Colonic mucosa (tissue), 4 donors: ENCODE measurements at regions of chr18 and their contacts with region 1.

Region 1: DNA sequence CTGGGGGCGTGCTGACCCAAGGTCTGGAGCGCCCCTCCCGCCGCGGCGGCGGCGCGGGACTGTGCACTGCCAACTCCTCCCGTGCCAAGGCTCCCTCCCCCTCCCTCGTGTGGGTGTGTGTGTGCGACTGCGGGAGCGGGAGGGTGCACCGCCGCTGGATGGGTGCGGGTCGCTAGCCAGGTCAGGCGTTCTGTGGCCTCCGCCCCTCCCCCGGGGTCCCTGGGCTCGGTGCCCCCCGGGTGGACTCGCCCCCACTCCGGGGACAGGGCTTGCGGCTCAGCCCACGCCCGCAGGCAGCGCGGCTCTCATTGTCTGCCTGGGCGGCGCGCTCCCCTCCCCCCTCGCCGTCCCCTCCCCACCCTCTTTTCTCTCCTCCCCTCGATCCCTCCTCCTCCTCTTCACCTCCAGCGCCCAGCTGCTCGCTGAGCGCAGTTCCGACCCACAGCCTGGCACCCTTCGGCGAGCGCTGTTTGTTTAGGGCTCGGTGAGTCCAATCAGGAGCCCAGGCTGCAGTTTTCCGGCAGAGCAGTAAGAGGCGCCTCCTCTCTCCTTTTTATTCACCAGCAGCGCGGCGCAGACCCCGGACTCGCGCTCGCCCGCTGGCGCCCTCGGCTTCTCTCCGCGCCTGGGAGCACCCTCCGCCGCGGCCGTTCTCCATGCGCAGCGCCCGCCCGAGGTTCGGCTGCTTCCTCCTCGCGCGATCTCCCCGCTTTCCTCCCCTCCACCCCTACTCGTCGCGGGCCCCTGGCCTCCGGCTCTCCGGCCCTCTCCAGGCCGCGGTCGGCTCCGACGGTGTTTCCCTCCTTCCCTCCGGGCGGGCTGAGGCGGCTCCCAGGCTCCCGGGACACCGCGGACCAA is at the start of gene GATA6:
- DNase-seq: peak; percentile 94
- H3K4me3 ChIP-seq: peak within 1 kb of the TSS; percentile 82
- H3K27ac ChIP-seq: peak within 1 kb of the TSS; percentile 92
- H3K4me1 ChIP-seq: no peaks in the 10 kb centered on the region
- H3K27me3 ChIP-seq: peaks cover 28% of the 10 kb centered on the region
- CTCF ChIP-seq: peak; percentile 6
- total RNA-seq, gene GATA6: 52.7 to 61.3 TPM

Region 2: GRCh38 chr18:21393986-21394385 is 775.2 kb before region 1 on chr18:
- intact Hi-C with region 1: no loop called
- DNase-seq: no peak
- H3K4me3 ChIP-seq: no peak overlapping the region
- H3K27ac ChIP-seq: no peak overlapping the region
- H3K4me1 ChIP-seq: no peaks in the 10 kb centered on the region
- H3K27me3 ChIP-seq: no peaks in the 10 kb centered on the region
- CTCF ChIP-seq: no peak

Region 3: DNA sequence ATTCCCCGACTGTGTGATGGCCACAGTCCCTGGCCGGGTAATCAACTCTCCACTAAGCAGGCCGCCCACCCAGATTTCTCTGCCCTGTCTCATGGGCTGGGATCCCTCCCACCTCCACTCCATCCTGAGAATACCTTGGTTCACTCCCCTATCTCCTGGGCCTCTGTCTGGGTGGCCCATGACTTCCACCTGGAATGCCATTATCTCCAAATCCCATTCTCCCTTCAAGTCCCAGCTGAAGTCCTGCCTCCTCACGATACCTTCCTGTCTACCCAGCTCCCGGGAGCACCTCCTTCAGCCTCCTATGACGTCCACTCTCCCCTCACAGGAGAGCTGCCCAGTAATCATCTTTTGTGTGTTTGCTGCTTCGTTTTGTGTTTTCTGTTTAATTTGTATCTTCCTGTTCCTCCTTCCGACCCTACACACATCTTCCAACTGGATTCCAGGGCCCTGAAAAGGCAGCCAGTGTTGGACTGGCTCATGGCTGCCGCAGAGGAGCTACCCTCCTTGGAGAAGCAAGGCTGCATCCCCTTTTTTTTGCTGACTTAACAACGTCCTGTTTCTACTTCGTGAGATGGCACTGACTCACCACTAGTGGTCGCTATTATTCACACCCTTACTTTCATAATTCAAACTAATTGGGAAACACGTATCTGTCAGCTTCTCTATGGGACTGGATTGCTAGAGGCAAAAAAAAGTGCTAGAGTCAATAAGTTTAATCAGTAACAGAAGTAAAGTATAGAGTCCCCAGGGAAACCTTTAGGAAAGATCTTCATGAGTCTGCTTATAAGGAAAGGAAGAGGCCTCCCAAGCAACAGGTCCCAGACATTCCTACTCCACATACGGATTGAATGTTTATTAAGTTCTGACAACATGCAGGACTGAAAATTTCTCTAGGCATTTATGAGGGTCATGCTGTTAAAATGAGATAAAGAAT is 171.8 kb before region 1 on chr18:
- intact Hi-C with region 1: loop called (anchors 5 kb)
- DNase-seq: peak; percentile 33
- H3K4me3 ChIP-seq: no peak overlapping the region
- H3K27ac ChIP-seq: peak overlapping the region; percentile 56
- H3K4me1 ChIP-seq: peaks cover 9% of the 10 kb centered on the region
- H3K27me3 ChIP-seq: no peaks in the 10 kb centered on the region
- CTCF ChIP-seq: peak; percentile 73

Region 4: DNA sequence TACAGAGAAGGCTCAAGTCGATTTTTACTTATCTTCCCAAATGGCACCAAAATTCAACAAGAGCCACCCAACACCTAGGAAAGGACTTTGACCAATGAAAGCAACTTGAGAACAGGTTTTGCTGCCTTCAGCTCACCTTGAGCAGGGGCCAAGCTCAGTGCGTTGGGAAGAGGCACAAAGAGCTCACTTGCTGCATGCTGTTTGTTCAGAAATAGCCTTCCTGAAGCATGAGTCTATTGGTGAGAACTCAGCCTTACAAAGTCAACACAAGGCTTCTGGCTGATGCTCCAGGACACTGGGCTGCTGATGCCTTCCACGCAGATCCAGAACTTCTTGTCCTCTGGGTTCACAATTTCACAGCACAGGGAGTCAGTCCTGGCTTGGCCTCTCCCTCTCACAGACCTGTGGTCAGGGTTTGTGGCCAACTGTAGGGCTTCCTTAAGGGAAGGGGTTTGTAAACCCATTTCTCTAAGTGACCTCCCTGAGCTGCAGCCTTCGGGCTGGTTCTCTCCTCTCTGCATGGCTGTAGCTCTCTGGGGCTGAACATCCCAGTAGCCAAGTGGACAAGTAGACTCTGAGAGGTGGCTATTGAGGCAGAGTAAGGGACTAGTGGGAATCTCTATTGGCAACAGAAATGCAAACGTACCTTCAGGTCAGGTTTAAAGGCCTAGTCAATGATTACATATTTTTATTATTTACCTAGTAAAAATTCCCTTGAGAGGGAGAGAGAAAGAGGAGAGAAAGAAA is 124.6 kb before region 1 on chr18:
- intact Hi-C with region 1: loop called (anchors 5 kb)
- DNase-seq: peak; percentile 84
- H3K4me3 ChIP-seq: no peak overlapping the region
- H3K27ac ChIP-seq: peak overlapping the region; percentile 93
- H3K4me1 ChIP-seq: peaks cover 9% of the 10 kb centered on the region
- H3K27me3 ChIP-seq: no peaks in the 10 kb centered on the region
- CTCF ChIP-seq: no peak

Region 5: GRCh38 chr18:22108674-22109073 is 60.6 kb before region 1 on chr18:
- intact Hi-C with region 1: loop called (anchors 10 kb)
- DNase-seq: no peak
- H3K4me3 ChIP-seq: no peak overlapping the region
- H3K27ac ChIP-seq: no peak overlapping the region
- H3K4me1 ChIP-seq: no peaks in the 10 kb centered on the region
- H3K27me3 ChIP-seq: no peaks in the 10 kb centered on the region
- CTCF ChIP-seq: no peak

Region 6: DNA sequence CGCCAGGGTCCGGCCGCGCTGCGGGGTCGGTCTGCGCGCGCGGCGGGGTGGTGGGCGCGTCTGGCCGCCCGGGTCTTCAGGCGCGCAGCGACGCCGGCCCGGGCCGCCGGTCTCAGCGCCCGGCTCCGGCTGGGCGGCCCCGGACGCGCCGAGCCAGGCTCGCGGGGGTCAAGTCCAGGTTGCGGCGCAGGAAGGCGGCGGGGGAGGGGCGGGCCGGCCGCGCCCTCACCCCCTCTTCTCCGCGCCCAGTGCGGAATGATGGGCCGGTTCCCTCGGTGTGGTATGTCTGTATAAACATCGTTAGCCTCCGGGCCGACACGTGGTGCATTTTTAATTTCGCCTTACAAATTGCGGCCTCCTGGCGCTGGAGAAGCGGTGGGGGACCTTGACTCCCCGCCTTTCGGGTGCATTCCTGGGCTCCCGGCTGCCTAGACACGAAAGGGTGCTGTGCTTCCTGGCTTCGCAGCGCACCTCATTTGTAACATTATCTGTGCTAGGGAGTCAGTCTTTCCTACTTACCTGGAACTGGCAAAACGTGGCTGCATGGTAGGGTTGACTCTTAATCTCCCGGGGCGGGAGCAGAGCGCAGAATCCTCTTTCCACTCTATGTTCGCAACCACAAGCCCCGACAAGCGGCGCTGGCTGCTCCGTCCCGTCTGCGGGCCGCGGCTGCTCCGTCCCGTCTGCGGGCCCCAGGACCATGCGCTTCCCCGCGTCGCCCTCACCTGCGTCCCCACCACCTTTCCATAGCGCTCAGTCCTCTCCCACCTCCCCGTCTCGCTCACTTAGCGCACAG is 179.5 kb after region 1 on chr18:
- intact Hi-C with region 1: loop called (anchors 5 kb)
- DNase-seq: peak; percentile 74
- H3K4me3 ChIP-seq: peak overlapping the region; percentile 45
- H3K27ac ChIP-seq: peak overlapping the region; percentile 78
- H3K4me1 ChIP-seq: no peaks in the 10 kb centered on the region
- H3K27me3 ChIP-seq: no peaks in the 10 kb centered on the region
- CTCF ChIP-seq: no peak

Region 7: DNA sequence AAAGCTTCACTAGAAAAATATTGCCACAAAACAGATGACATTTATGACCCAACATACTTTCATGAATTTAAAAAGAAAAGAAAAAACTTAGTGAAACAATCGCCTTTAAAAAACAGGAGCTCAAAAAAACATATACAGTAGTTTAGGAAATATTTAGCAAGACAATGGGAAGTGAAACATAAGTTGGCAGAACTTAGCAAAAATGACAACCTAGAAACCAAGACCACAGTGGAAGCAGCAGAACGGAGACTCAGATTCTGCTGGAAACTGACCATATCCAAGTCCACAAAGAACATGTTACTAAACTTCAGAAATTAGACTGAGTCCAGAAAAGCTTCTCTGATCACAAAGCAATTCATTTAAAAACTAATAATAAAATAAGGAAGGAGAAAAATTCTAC is 290.3 kb after region 1 on chr18:
- intact Hi-C with region 1: no loop called
- DNase-seq: no peak
- H3K4me3 ChIP-seq: no peak overlapping the region
- H3K27ac ChIP-seq: no peak overlapping the region
- H3K4me1 ChIP-seq: no peaks in the 10 kb centered on the region
- H3K27me3 ChIP-seq: no peaks in the 10 kb centered on the region
- CTCF ChIP-seq: no peak

Region 8: DNA sequence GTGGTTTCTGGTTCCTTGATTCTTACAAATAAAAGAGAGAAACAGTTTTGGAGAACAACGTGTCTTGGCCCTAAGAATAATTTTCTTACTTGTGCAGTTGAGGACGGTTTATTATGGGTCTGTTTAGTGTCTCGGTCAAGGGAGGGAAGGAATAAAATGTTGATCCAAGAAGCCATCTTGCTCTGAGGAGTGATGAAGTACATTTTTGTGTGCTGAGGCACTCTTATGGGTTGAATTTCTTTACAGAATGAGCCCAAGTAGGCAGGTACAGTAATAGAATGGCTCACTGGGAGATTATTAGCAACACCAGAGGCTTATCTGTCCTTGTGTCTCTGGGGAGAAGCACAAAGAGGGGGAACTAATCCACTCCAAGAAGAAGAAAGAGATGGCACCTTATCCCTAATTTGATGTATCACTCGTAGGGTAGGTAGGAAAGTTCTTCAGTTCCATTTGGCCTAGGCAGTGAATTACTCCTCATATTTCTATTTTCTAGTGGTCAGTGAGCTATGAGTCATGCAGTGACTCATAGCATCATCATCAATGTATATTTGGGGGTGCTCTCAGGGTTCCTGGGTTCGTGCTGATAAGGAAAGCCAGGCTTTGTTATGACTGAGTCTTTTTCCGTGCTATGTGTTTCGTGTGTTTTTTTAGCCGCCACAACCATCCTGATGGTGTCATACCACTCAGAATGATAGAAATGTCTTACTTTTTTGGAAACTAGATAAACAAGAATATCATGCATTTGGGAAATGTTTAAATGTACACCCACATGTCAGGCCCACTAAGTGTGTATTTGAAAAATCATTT is 498.6 kb after region 1 on chr18:
- intact Hi-C with region 1: no loop called
- DNase-seq: no peak
- H3K4me3 ChIP-seq: no peak overlapping the region
- H3K27ac ChIP-seq: no peak overlapping the region
- H3K4me1 ChIP-seq: no peaks in the 10 kb centered on the region
- H3K27me3 ChIP-seq: no peaks in the 10 kb centered on the region
- CTCF ChIP-seq: no peak